ENCODE measurements at regions of chr11 and their contacts with region 1.

Region 1: GRCh38 chr11:8964324-8965320 is at the start of gene TMEM9B:
- DNase-seq: peak; percentile 62
- ATAC-seq: peak; percentile 89
- H3K4me3 ChIP-seq: peak within 1 kb of the TSS; percentile 83
- H3K27ac ChIP-seq: peak within 1 kb of the TSS; percentile 92
- H3K4me1 ChIP-seq: peaks cover 5% of the 10 kb centered on the region
- H3K27me3 ChIP-seq: no peaks in the 10 kb centered on the region
- CTCF ChIP-seq: no peak
- EP300 ChIP-seq: no peak; a peak in 1 of 4 replicates
- POLR2A ChIP-seq: peak; percentile 87
- RAD21 ChIP-seq: no peak
- polyA plus RNA-seq, gene TMEM9B: 11.5 to 16.6 TPM

Region 2: DNA sequence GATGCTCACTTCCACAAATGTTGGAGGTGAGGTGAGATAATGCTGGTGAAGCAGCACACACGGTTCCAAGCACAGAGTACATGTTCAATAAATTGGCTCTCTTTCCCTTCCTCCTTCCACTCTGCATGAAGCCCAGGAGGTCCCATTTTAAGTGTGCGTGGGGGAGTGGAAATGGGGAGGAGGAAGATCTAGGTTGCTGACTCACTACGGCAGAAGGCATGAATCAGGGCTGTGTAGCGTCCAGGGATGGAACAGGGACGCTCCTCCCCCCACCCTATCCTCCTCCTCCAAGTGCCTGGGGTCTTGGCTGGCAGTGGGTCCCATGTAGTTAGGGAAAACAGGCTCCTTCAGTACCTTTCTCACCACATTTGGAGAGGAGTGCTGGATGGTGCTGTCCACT is 326.3 kb before region 1 on chr11:
- CTCF ChIA-PET with region 1: no interaction called
- POLR2A ChIA-PET with region 1: no interaction called
- RAD21 ChIA-PET with region 1: interaction called, 5 read pairs
- SMC1A ChIA-PET with region 1: interaction called, 10 read pairs
- in situ Hi-C with region 1: no loop called
- intact Hi-C with region 1: no loop called
- DNase-seq: no peak
- ATAC-seq: no peak
- H3K4me3 ChIP-seq: no peak overlapping the region
- H3K27ac ChIP-seq: no peak overlapping the region
- H3K4me1 ChIP-seq: peaks cover 6% of the 10 kb centered on the region; the same call in 1 of the 2 replicates
- H3K27me3 ChIP-seq: no peaks in the 10 kb centered on the region
- CTCF ChIP-seq: no peak
- EP300 ChIP-seq: no peak
- POLR2A ChIP-seq: no peak
- RAD21 ChIP-seq: no peak

Region 3: GRCh38 chr11:8688414-8689362 is 275.9 kb before region 1 on chr11:
- CTCF ChIA-PET with region 1: interaction called, 9 read pairs
- POLR2A ChIA-PET with region 1: interaction called, 5 read pairs
- RAD21 ChIA-PET with region 1: interaction called, 10 read pairs
- SMC1A ChIA-PET with region 1: interaction called, 6 read pairs
- in situ Hi-C with region 1: loop called (anchors 5 kb)
- intact Hi-C with region 1: loop called (anchors 1 kb)
- DNase-seq: peak; percentile 92
- ATAC-seq: peak; percentile 91
- H3K4me3 ChIP-seq: peak overlapping the region; percentile 88
- H3K27ac ChIP-seq: peak overlapping the region; percentile 88
- H3K4me1 ChIP-seq: peaks cover 31% of the 10 kb centered on the region
- H3K27me3 ChIP-seq: no peaks in the 10 kb centered on the region
- CTCF ChIP-seq: peak in 1 of 3 experiments; percentile 16; a peak in 1 of 6 replicates
- EP300 ChIP-seq: peak in 1 of 2 experiments; percentile 40; a peak in 1 of 4 replicates
- POLR2A ChIP-seq: peak; percentile 92
- RAD21 ChIP-seq: peak; percentile 7; the same call in 1 of the 2 replicates

Region 4: DNA sequence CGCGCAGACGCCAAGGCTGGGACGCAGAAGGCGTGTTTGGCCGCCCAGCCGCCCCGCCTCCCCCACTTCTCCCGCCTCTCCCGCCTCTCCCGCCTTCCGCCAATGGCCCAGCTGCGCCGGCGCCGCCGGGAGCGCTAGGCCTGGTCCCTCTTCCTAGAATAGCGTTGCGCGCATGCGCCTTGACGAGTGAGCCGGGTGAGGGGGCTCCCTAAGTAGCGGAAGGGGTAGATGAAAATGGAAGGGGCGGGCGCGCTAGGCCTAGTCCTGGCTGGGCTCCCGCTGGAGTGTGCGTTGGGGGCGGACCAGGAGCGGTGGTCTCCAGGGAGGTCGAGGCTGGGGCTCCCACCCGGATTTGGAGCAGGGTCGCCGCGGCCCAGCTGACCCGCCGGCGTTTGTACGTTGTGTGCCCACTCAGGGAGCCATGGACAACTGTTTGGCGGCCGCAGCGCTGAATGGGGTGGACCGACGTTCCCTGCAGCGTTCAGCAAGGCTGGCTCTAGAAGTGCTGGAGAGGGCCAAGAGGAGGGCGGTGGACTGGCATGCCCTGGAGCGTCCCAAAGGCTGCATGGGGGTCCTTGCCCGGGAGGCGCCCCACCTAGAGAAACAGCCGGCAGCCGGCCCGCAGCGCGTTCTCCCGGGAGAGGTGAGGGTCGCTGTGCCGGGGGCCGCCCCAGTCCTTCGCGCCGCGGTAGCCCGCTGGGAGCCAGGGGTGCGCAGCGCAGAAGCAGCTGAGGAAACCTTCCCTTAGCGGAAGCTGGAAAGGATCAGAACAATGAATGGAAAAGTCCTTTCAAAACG is 53.4 kb before region 1 on chr11 and contains the start of gene AKIP1:
- CTCF ChIA-PET with region 1: interaction called, 196 read pairs
- POLR2A ChIA-PET with region 1: interaction called, 10 read pairs
- RAD21 ChIA-PET with region 1: interaction called, 97 read pairs
- SMC1A ChIA-PET with region 1: interaction called, 77 read pairs
- in situ Hi-C with region 1: no loop called
- intact Hi-C with region 1: loop called (anchors 1 kb)
- DNase-seq: peak; percentile 65
- ATAC-seq: peak; percentile 88
- H3K4me3 ChIP-seq: peak within 1 kb of the TSS; percentile 95
- H3K27ac ChIP-seq: peak within 1 kb of the TSS; percentile 65
- H3K4me1 ChIP-seq: peaks cover 11% of the 10 kb centered on the region
- H3K27me3 ChIP-seq: no peaks in the 10 kb centered on the region; a peak in 1 of 4 replicates
- CTCF ChIP-seq: no peak
- EP300 ChIP-seq: no peak
- POLR2A ChIP-seq: peak; percentile 61; the same call in 1 of the 2 replicates
- RAD21 ChIP-seq: no peak
- polyA plus RNA-seq, gene AKIP1: 5.1 to 14.7 TPM

Region 5: DNA sequence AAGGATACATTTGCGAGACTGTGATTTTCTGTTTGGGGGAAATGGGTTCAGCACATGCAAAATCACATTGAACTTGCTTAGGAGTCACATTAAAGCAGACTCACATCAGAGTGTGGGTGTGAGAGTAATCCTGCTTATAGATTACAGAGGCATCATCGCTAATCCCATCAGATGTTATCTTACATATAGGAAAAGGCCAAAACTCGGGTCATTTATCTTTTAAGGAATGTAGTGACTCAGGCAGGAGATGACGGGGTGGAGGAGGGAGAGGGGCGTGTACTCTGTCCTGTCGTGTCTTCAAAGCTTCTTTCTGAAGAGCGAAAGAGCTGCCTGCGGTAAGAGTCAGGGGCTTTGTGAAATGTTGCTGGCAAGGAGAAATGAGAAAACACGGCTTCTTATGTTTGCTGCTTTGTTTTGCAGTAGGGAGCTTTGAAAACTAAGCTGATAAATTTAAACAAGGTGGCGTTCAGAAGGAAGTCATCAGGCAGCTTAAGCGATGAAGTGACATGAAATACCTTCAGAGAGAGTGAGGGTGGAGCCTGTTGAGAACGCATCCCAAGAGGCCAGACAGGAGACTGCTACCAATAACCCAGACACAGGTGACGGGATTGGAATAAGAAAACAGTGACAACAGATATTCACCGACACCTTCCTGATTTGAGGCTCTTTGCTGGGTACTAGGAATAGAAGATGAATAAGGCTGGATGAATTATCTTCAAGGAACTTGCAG is 29.7 kb before region 1 on chr11:
- CTCF ChIA-PET with region 1: interaction called, 30 read pairs
- POLR2A ChIA-PET with region 1: interaction called, 3 read pairs
- RAD21 ChIA-PET with region 1: interaction called, 7 read pairs
- SMC1A ChIA-PET with region 1: interaction called, 9 read pairs
- in situ Hi-C with region 1: no loop called
- intact Hi-C with region 1: no loop called
- DNase-seq: no peak
- ATAC-seq: no peak
- H3K4me3 ChIP-seq: no peak overlapping the region
- H3K27ac ChIP-seq: no peak overlapping the region
- H3K4me1 ChIP-seq: no peaks in the 10 kb centered on the region
- H3K27me3 ChIP-seq: no peaks in the 10 kb centered on the region
- CTCF ChIP-seq: no peak
- EP300 ChIP-seq: no peak
- POLR2A ChIP-seq: no peak
- RAD21 ChIP-seq: no peak

Region 6: GRCh38 chr11:8948886-8949285 is 15.7 kb before region 1 on chr11:
- CTCF ChIA-PET with region 1: interaction called, 57 read pairs
- POLR2A ChIA-PET with region 1: interaction called, 7 read pairs
- RAD21 ChIA-PET with region 1: interaction called, 4 read pairs
- SMC1A ChIA-PET with region 1: interaction called, 14 read pairs
- in situ Hi-C with region 1: no loop called
- intact Hi-C with region 1: no loop called
- DNase-seq: no peak
- ATAC-seq: no peak
- H3K4me3 ChIP-seq: no peak overlapping the region
- H3K27ac ChIP-seq: no peak overlapping the region
- H3K4me1 ChIP-seq: no peaks in the 10 kb centered on the region
- H3K27me3 ChIP-seq: no peaks in the 10 kb centered on the region
- CTCF ChIP-seq: no peak
- EP300 ChIP-seq: no peak
- POLR2A ChIP-seq: no peak
- RAD21 ChIP-seq: no peak

Region 7: DNA sequence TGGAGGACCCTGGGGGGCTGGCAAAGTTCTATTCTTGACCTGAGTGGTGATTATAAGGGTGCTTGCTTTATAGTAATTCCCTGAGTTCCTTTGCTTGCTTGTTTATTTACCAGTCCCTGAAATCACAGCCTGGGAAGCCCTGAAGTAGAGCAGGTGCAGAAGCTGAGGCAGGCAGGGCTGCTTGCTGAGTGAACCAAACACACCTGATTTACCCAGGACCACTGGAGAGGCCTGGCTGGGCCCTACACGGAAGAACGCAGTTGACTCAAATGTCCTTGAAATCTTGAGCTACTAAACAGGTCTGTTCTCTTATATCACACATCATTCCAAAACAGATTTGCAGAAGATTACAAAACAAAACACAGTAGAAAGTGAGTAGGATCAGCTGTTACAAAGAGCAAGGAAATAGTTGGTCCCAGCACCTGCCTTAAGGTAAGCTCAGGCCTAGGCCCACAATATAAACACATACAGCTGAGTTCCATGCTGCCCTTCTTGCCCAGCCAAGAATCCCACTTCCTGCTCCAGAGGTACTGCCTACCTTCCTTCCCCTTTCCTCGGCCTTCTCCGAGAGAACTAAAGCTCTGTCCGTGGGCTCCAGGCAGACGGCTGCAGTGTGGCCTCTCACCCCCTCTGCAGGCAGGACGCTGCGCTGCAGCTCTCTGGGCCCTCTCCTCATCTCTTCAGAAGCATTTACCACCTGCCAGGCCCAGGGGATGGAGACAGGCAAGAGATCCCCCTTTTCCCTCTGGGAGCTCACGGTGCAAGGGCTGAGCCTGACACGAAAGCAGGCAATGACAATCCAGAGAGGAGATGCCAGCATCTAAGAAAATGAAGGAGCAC is 172.9 kb after region 1 on chr11:
- CTCF ChIA-PET with region 1: interaction called, 39 read pairs
- POLR2A ChIA-PET with region 1: no interaction called
- RAD21 ChIA-PET with region 1: interaction called, 28 read pairs
- SMC1A ChIA-PET with region 1: interaction called, 33 read pairs
- in situ Hi-C with region 1: no loop called
- intact Hi-C with region 1: no loop called
- DNase-seq: peak; percentile 27
- ATAC-seq: peak; percentile 100
- H3K4me3 ChIP-seq: no peak overlapping the region
- H3K27ac ChIP-seq: no peak overlapping the region
- H3K4me1 ChIP-seq: no peaks in the 10 kb centered on the region
- H3K27me3 ChIP-seq: no peaks in the 10 kb centered on the region
- CTCF ChIP-seq: peak; percentile 91 to 99 (median 97)
- EP300 ChIP-seq: no peak
- POLR2A ChIP-seq: no peak
- RAD21 ChIP-seq: peak; percentile 95

Measured in GM12878 (cell line).